ENCODE measurements at regions of chr22 and their contacts with region 1.

Region 1: DNA sequence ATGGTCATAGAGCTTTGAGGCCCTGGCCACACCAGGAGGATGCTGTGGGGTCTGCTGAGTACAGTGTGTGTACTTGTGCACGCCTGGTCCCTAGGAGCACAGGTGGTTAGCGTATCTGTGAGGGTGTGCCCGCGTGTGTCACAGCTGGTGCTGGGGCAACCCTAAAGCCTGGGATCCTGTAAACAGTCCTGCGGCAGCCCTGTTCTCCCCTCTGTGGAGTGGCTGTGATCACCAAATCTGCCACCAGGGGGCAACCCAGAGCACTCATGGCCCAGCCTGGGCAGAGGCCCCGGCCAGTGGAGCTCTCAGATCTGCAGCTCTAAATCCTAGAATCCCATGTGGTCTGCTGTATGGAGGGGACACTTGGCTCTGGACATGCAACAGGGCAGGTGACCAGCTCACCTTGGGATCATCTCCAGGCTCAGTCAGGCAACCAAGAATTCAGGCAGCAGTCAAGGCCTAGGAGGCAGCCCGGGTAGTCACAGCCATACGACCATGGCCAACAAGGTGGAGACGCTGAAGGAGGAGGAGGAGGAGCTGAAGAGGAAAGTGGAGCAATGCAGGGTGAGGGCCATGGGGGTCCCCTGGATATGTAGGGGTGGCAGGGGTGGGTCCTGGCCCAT is 3.9 kb downstream of the SH3BP1 start:
- DNase-seq: no peak
- ATAC-seq: peak; percentile 79
- H3K4me3 ChIP-seq: no peak overlapping the region
- H3K27ac ChIP-seq: no peak overlapping the region
- H3K4me1 ChIP-seq: peaks cover 28% of the 10 kb centered on the region
- H3K27me3 ChIP-seq: no peaks in the 10 kb centered on the region
- CTCF ChIP-seq: peak; percentile 86 to 92 (median 89)
- EP300 ChIP-seq: no peak
- POLR2A ChIP-seq: no peak
- RAD21 ChIP-seq: peak; percentile 62

Region 2: DNA sequence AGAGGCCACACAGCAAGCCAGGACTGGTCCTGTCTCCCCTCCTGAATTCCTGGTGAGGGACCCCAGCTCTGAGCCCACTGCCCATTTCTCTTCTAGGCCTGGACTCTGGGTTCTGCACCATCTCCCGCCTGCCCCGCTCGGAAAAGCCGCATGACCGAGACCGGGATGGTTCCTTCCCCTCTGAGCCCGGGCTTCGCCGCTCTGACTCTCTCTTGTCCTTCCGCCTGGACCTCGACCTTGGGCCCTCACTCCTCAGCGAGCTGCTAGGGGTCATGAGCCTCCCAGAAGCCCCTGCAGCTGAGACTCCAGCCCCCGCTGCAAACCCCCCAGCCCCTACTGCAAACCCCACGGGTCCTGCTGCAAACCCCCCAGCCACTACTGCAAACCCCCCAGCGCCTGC is 75.3 kb before region 1 on chr22:
- CTCF ChIA-PET with region 1: no interaction called
- POLR2A ChIA-PET with region 1: no interaction called
- RAD21 ChIA-PET with region 1: no interaction called
- SMC1A ChIA-PET with region 1: no interaction called
- in situ Hi-C with region 1: no loop called
- intact Hi-C with region 1: no loop called
- DNase-seq: no peak
- ATAC-seq: no peak
- H3K4me3 ChIP-seq: no peak overlapping the region
- H3K27ac ChIP-seq: no peak overlapping the region
- H3K4me1 ChIP-seq: peaks cover 11% of the 10 kb centered on the region
- H3K27me3 ChIP-seq: no peaks in the 10 kb centered on the region
- CTCF ChIP-seq: no peak
- EP300 ChIP-seq: no peak
- POLR2A ChIP-seq: no peak
- RAD21 ChIP-seq: no peak

Region 3: GRCh38 chr22:37676736-37677492 is 33.6 kb after region 1 on chr22:
- CTCF ChIA-PET with region 1: interaction called, 396 read pairs
- POLR2A ChIA-PET with region 1: interaction called, 15 read pairs
- RAD21 ChIA-PET with region 1: interaction called, 87 read pairs
- SMC1A ChIA-PET with region 1: interaction called, 98 read pairs
- in situ Hi-C with region 1: no loop called
- intact Hi-C with region 1: loop called (anchors 1 kb)
- DNase-seq: no peak
- ATAC-seq: peak; percentile 73
- H3K4me3 ChIP-seq: peak overlapping the region; percentile 91
- H3K27ac ChIP-seq: peak overlapping the region; percentile 85
- H3K4me1 ChIP-seq: peaks cover 37% of the 10 kb centered on the region
- H3K27me3 ChIP-seq: no peaks in the 10 kb centered on the region
- CTCF ChIP-seq: no peak
- EP300 ChIP-seq: no peak
- POLR2A ChIP-seq: peak; percentile 78
- RAD21 ChIP-seq: no peak

Region 4: DNA sequence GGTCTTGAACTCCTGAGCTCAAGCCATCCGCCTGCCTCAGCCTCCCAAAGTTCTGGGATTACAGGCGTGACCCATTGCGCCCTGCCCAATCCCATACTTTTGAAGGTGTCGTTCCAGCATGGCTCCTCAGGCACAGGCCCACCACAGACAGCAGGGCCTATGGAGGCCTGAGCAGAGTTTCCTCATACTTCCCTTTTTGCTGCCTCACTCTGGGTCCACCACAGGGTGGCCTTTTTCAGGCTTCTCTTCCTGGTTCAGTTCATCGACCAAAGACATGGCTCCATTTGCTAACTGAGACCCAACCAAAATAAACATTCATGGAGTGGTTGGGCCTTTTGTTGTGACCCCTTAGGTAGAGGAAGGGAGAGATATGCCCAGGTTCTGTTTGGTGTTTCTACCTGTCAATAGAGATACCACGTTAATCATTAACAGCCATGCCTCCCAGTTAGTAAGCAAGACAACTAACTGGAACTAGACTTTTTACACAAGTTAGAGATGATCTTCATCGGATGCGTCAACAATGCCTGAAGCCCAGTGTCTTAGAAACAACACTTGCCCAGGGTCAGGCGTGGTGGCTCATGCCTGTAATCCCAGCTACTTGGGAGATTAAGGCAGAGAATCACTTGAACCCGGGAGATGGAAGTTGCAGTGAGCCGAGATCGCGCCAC is 88.6 kb after region 1 on chr22:
- CTCF ChIA-PET with region 1: interaction called, 17 read pairs
- POLR2A ChIA-PET with region 1: interaction called, 3 read pairs
- RAD21 ChIA-PET with region 1: no interaction called
- SMC1A ChIA-PET with region 1: no interaction called
- in situ Hi-C with region 1: no loop called
- intact Hi-C with region 1: no loop called
- DNase-seq: no peak
- ATAC-seq: peak; percentile 92
- H3K4me3 ChIP-seq: no peak overlapping the region
- H3K27ac ChIP-seq: no peak overlapping the region
- H3K4me1 ChIP-seq: no peaks in the 10 kb centered on the region
- H3K27me3 ChIP-seq: no peaks in the 10 kb centered on the region
- CTCF ChIP-seq: peak in 2 of 3 experiments; percentile 15 to 22; a peak in 1 of 6 replicates
- EP300 ChIP-seq: no peak
- POLR2A ChIP-seq: no peak
- RAD21 ChIP-seq: no peak